Panc1 (cell line): ENCODE measurements at regions of chr14 and their contacts with region 1.

Region 1: DNA sequence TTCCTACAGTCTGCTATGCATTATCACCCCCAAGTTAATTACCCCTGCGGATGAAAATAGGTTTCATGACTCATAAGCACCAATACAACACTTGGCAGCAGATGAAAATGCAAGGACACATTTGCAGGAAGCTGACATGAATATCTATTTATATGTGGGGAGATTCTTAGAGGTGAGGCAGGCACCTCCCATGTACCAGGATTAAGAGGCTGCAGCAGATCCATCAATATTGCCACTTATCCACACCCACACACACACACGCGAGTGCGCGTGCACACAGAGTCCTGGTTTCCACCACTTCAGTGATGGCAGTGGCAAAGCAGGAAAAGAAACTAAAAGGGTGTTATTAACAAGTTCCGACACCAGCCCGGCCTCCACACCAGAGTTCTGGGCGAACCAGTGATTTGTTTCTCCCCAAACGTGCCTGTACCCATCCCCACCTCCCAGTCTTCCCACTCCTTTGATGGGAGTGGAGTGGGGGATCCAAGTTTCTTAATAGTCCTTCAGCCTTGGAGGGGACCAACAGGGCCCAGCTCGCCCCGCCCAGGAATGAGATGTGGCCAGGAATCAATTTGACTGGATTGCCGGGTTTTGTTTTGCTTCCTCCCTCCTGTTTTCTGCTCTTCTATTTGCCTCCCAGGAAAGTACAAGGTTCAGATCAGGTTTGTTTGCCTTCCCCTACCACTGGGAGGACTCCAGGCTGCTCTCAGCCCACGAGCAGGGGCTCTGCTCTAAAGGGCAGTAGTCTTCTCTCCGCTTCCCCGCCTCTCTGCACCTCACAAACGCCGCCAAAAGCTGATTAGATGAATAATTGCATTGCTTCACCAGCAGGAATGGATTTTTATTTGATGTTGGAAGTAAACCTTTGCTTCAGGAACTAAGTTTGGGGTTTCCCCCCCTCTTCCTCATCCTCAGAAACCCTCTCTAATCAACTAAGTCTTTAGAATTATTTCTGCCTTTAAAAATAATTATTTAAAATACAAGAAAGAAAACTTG is 5.2 kb downstream of the IRF2BPL start:
- DNase-seq: no peak
- ATAC-seq: no peak
- H3K4me3 ChIP-seq: peak overlapping the region; percentile 78 to 95
- H3K27ac ChIP-seq: peak overlapping the region; percentile 96
- H3K4me1 ChIP-seq: peaks cover 22% of the 10 kb centered on the region
- H3K27me3 ChIP-seq: no peaks in the 10 kb centered on the region
- CTCF ChIP-seq: no peak; the same call in 1 of the 2 replicates

Region 2: GRCh38 chr14:76918751-76919543 is 104.4 kb before region 1 on chr14:
- CTCF ChIA-PET with region 1: interaction called, 6 read pairs
- POLR2A ChIA-PET with region 1: interaction called, 8 read pairs
- in situ Hi-C with region 1: no loop called
- intact Hi-C with region 1: loop called (anchors 2 kb)
- DNase-seq: peak; percentile 74
- ATAC-seq: peak; percentile 85
- H3K4me3 ChIP-seq: 0 out of 4 replicates have a peak overlapping the region, but pooled peaks of 1 of the 2 experiments have one; percentile 8
- H3K27ac ChIP-seq: peak overlapping the region; percentile 99
- H3K4me1 ChIP-seq: peaks cover 72% of the 10 kb centered on the region
- H3K27me3 ChIP-seq: no peaks in the 10 kb centered on the region
- CTCF ChIP-seq: no peak

Region 3: DNA sequence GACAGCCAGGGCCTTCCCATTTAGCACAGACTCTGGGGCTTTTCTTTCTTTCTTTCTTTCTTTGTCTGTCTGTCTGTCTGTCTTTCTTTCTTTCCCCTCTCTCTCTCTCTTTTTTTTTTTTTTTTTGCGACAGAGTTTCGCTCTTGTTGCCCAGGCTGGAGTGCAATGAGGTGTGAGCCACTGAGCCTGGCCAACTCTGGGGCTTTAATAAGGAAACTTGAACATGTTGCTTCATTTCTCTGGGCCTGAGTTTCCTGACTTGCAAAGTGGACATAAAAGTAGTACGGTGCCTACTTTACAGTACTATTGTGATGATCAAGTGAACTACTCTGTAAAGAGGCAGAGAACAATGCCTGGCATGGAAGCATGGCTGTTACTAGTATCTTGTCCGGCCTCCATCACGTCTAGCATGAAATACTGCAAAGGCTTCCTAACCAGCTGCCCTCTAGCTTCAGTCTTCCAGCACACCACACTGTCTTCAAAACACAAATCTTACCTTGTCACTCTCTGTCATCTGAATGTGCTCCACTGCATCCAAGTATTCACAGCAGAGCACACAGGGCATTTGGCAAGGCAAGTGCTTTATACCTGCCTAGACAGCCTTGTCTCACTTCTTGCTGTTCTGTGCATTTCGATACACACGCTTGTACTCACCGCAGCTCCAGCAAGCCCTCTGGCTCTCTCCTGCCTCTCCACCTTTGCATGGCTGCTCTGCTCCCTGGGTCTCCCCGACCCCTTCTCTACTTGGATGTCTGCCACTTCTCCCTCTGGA is 91.5 kb before region 1 on chr14:
- CTCF ChIA-PET with region 1: no interaction called
- POLR2A ChIA-PET with region 1: interaction called, 11 read pairs
- in situ Hi-C with region 1: no loop called
- intact Hi-C with region 1: no loop called
- DNase-seq: no peak
- ATAC-seq: peak; percentile 59; the same call in 1 of the 2 replicates
- H3K4me3 ChIP-seq: no peak overlapping the region
- H3K27ac ChIP-seq: peak overlapping the region; percentile 12; the same call in 1 of the 2 replicates
- H3K4me1 ChIP-seq: peaks cover 31% of the 10 kb centered on the region
- H3K27me3 ChIP-seq: no peaks in the 10 kb centered on the region
- CTCF ChIP-seq: no peak

Region 4: DNA sequence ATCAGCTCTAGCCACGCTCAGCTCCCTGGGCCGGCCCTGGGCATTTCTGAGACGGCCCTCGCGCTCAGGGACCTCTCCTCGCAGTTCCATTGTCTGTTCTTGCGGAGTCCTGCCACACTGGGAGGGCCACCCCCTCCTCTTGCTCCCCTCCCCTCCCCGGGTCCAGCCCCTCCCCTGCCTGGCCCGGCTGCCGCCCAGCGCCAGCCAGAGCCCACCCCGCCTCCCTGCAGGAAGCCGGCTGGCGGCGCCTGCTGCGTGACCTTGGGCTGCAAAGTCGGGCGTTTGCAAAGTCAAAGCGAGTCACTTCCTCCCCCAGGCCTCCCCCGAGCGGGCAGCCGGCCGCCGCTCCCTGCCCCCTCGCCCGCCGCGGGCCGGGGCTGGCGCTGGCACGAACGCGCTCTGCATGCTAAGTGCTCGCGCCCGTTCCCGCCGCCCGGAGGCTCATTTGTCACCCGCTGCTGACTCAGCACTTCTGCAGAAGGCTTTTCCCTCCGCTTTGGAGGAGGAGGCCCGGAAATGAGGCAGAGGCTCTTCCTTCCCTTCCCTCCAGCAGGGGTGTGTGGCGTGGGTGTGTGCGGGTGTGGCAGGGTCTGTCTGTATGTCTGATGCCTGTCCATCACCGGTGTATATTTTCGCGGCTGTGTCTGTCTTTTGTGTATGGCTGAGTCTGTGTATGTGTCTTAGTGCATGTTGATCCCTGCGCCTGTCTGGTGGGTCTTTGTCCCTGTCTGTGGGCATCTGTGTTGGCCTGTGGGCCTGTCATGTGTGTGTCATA is 66.8 kb before region 1 on chr14:
- CTCF ChIA-PET with region 1: interaction called, 4 read pairs
- POLR2A ChIA-PET with region 1: interaction called, 6 read pairs
- in situ Hi-C with region 1: no loop called
- intact Hi-C with region 1: loop called (anchors 2 kb)
- DNase-seq: no peak
- ATAC-seq: peak; percentile 74
- H3K4me3 ChIP-seq: peak overlapping the region; percentile 5 to 29; a peak in 3 of 4 replicates
- H3K27ac ChIP-seq: peak overlapping the region; percentile 98
- H3K4me1 ChIP-seq: peaks cover 70% of the 10 kb centered on the region
- H3K27me3 ChIP-seq: no peaks in the 10 kb centered on the region
- CTCF ChIP-seq: no peak

Region 5: GRCh38 chr14:76985540-76986230 is 37.6 kb before region 1 on chr14:
- CTCF ChIA-PET with region 1: no interaction called
- POLR2A ChIA-PET with region 1: no interaction called
- in situ Hi-C with region 1: no loop called
- intact Hi-C with region 1: no loop called
- DNase-seq: no peak
- ATAC-seq: peak; percentile 59
- H3K4me3 ChIP-seq: no peak overlapping the region
- H3K27ac ChIP-seq: no peak overlapping the region
- H3K4me1 ChIP-seq: peaks cover 10% of the 10 kb centered on the region
- H3K27me3 ChIP-seq: no peaks in the 10 kb centered on the region
- CTCF ChIP-seq: no peak

Region 6: GRCh38 chr14:77040741-77041653 is 17.7 kb after region 1 on chr14:
- CTCF ChIA-PET with region 1: interaction called, 8 read pairs
- POLR2A ChIA-PET with region 1: interaction called, 18 read pairs
- in situ Hi-C with region 1: no loop called
- intact Hi-C with region 1: no loop called
- DNase-seq: no peak
- ATAC-seq: peak; percentile 52; the same call in 1 of the 2 replicates
- H3K4me3 ChIP-seq: peak overlapping the region in 1 of 2 experiments; percentile 37; a peak in 3 of 4 replicates
- H3K27ac ChIP-seq: peak overlapping the region; percentile 99
- H3K4me1 ChIP-seq: peaks cover 94% of the 10 kb centered on the region
- H3K27me3 ChIP-seq: no peaks in the 10 kb centered on the region
- CTCF ChIP-seq: no peak

Region 7: GRCh38 chr14:77076874-77077439 is 53.7 kb after region 1 on chr14:
- CTCF ChIA-PET with region 1: no interaction called
- POLR2A ChIA-PET with region 1: no interaction called
- in situ Hi-C with region 1: no loop called
- intact Hi-C with region 1: no loop called
- DNase-seq: no peak
- ATAC-seq: no peak
- H3K4me3 ChIP-seq: no peak overlapping the region
- H3K27ac ChIP-seq: no peak overlapping the region
- H3K4me1 ChIP-seq: peaks cover 6% of the 10 kb centered on the region; the same call in 1 of the 2 replicates
- H3K27me3 ChIP-seq: no peaks in the 10 kb centered on the region
- CTCF ChIP-seq: no peak

Region 8: DNA sequence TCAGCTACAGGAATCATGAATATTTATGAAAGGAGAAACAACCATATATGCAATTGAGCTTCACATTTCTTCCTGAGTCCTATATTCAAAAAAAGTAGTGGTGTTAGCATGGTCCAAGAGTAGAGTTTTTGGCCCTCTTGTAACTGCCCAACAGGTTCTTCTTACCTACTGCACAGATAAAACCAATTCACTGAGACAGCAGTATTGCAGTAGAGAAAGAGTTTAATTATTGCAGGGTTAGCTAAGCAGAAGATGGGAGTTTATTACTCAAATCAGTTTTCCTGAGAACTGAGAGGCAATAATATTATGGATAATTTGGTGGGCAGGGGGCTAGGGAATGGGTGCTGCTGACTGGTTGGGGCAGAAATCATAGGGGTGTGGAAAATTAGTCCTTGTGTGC is 68.2 kb after region 1 on chr14:
- CTCF ChIA-PET with region 1: no interaction called
- POLR2A ChIA-PET with region 1: interaction called, 15 read pairs
- in situ Hi-C with region 1: no loop called
- intact Hi-C with region 1: no loop called
- DNase-seq: no peak
- ATAC-seq: no peak
- H3K4me3 ChIP-seq: no peak overlapping the region
- H3K27ac ChIP-seq: no peak overlapping the region
- H3K4me1 ChIP-seq: peaks cover 3% of the 10 kb centered on the region; the same call in 1 of the 2 replicates
- H3K27me3 ChIP-seq: no peaks in the 10 kb centered on the region
- CTCF ChIP-seq: no peak

Region 9: GRCh38 chr14:77158175-77158891 is 135.0 kb after region 1 on chr14:
- CTCF ChIA-PET with region 1: no interaction called
- POLR2A ChIA-PET with region 1: no interaction called
- in situ Hi-C with region 1: no loop called
- intact Hi-C with region 1: no loop called
- DNase-seq: no peak
- ATAC-seq: peak; percentile 76
- H3K4me3 ChIP-seq: no peak overlapping the region
- H3K27ac ChIP-seq: no peak overlapping the region
- H3K4me1 ChIP-seq: no peaks in the 10 kb centered on the region
- H3K27me3 ChIP-seq: 0 out of 2 replicates have a peak, but pooled peaks cover 2% of the 10 kb centered on the region
- CTCF ChIP-seq: no peak

Region 10: DNA sequence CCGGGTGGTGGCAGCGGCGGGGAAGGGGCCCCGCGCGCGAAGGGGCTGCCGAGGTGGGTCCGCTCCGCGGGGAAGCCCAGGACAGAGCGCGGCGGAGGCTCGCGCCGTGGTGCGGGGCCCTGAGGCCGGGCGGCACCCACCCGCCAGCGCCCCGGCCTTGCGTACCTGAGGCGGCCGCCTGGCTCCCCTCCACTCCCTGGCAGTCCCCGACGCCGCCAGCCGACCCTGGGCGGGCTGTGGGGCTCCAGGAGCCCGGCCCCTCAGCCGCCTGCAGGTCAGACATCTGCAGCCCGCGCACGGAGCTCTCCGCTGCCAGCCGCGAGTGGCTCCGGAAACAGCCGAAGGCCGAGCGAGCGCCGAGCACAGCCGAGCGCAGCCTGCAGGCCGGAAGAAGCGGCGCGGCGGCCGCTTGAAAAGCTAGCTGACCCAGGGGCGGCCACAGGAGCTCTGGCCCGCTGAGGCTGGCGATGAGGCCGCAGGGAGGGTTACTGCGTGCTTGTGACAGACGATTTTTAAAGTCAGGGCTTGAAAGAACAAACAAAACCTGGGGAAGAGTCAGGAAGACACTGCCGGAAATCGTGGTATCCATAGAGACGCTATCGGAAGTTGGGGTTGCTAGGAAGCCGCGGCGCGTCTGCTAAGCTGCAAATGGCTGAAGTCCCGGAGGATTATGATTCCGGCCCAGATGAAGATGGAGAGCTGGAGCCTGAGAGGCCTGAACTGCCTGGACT is 353.6 kb after region 1 on chr14 and contains the starts of genes SAMD15 and TMED8:
- CTCF ChIA-PET with region 1: no interaction called
- POLR2A ChIA-PET with region 1: interaction called, 14 read pairs
- in situ Hi-C with region 1: no loop called
- intact Hi-C with region 1: no loop called
- DNase-seq: peak; percentile 69
- ATAC-seq: peak; percentile 99
- H3K4me3 ChIP-seq: peak within 1 kb of the TSS; percentile 70 to 83
- H3K27ac ChIP-seq: peak within 1 kb of the TSS; percentile 81
- H3K4me1 ChIP-seq: peaks cover 6% of the 10 kb centered on the region
- H3K27me3 ChIP-seq: no peaks in the 10 kb centered on the region
- CTCF ChIP-seq: peak; percentile 27; the same call in 1 of the 2 replicates
- total RNA-seq, gene SAMD15: 1.4 TPM
- total RNA-seq, gene TMED8: 8.5 TPM

Region 11: GRCh38 chr14:77603654-77604255 is 580.5 kb after region 1 on chr14:
- CTCF ChIA-PET with region 1: no interaction called
- POLR2A ChIA-PET with region 1: no interaction called
- in situ Hi-C with region 1: no loop called
- intact Hi-C with region 1: no loop called
- DNase-seq: no peak
- ATAC-seq: peak; percentile 58; the same call in 1 of the 2 replicates
- H3K4me3 ChIP-seq: no peak overlapping the region
- H3K27ac ChIP-seq: no peak overlapping the region
- H3K4me1 ChIP-seq: peaks cover 4% of the 10 kb centered on the region
- H3K27me3 ChIP-seq: no peaks in the 10 kb centered on the region
- CTCF ChIP-seq: peak; percentile 47